CD14-positive monocyte (primary cell): ENCODE measurements at regions of chr15 and their contacts with region 1.

Region 1: GRCh38 chr15:71743861-71744382 is 66.4 kb upstream of the NR2E3 start:
- DNase-seq: peak; percentile 21 to 36 (median 35)
- H3K4me3 ChIP-seq: no peak overlapping the region
- H3K4me3 Mint-ChIP-seq: no peak overlapping the region
- H3K27ac ChIP-seq: no peak overlapping the region
- H3K27ac Mint-ChIP-seq: no peak overlapping the region
- H3K4me1 ChIP-seq: no peaks in the 10 kb centered on the region
- H3K4me1 Mint-ChIP-seq: no peaks in the 10 kb centered on the region
- H3K27me3 ChIP-seq: no peaks in the 10 kb centered on the region
- H3K27me3 Mint-ChIP-seq: peaks cover 0 to 7% (median 4%) of the 10 kb centered on the region in 3 donors
- CTCF ChIP-seq: peak; percentile 86

Region 2: DNA sequence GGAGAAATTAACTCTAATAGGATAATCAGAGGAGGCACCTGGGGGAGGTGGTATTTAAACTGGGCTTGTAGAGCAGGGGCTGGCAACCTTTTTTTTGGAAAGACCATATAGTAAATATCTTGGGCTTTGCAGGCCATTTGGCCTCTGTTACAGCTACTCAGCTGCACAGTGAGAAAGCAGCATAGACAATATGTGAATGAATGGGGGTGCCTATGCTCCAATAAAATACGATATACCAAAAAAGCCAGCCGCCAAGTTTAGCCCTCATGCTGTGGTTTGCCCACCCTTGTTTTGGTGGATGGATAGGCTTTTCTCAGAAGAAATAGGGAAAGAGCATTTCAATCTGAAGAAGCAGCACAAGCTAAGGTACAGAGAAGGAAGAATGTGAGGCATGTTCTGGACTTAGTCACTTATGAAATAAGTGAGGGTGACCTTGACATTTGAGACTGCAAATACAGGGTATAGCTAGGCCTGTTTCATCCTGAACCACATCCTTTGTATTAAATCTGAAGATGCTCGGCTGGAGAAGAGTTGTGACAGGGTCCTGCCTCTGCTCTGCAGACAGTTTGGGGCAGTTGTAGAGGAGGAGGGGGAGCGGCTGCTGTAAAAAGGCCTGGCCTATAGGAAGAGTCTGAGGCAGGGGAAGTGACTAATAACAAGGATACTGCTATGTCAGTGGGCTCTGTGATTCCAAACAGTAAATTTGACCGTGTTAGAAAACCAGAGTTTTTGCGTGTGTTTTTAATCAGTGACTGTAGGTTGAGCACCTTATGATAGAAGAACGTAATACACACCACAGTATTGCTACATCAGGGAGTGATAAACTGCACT is 64.5 kb before region 1 on chr15:
- intact Hi-C with region 1: no loop called
- DNase-seq: no peak
- H3K4me3 ChIP-seq: no peak overlapping the region
- H3K4me3 Mint-ChIP-seq: peak overlapping the region in 1 of 2 donors; percentile 36
- H3K27ac ChIP-seq: no peak overlapping the region
- H3K27ac Mint-ChIP-seq: no peak overlapping the region
- H3K4me1 ChIP-seq: no peaks in the 10 kb centered on the region
- H3K4me1 Mint-ChIP-seq: no peaks in the 10 kb centered on the region
- H3K27me3 ChIP-seq: no peaks in the 10 kb centered on the region
- H3K27me3 Mint-ChIP-seq: peaks cover 4 to 11% (median 6%) of the 10 kb centered on the region in 3 donors
- CTCF ChIP-seq: no peak

Region 3: GRCh38 chr15:71800835-71801745 is 57.2 kb after region 1 on chr15:
- intact Hi-C with region 1: loop called in 1 of 2 experiments (anchors 2 kb)
- DNase-seq: peak in 2 of 3 donors; percentile 5 to 10
- H3K4me3 ChIP-seq: no peak overlapping the region
- H3K4me3 Mint-ChIP-seq: no peak overlapping the region
- H3K27ac ChIP-seq: no peak overlapping the region
- H3K27ac Mint-ChIP-seq: no peak overlapping the region
- H3K4me1 ChIP-seq: no peaks in the 10 kb centered on the region
- H3K4me1 Mint-ChIP-seq: peaks cover 2% of the 10 kb centered on the region
- H3K27me3 ChIP-seq: no peaks in the 10 kb centered on the region
- H3K27me3 Mint-ChIP-seq: peaks cover 6 to 8% (median 7%) of the 10 kb centered on the region in 3 donors
- CTCF ChIP-seq: peak; percentile 60

Region 4: GRCh38 chr15:72155635-72156616 is 412.0 kb after region 1 on chr15:
- intact Hi-C with region 1: loop called (anchors 2 to 10 kb)
- DNase-seq: peak; percentile 70 to 75 (median 74)
- H3K4me3 ChIP-seq: peak overlapping the region; percentile 35 to 74 (median 46)
- H3K4me3 Mint-ChIP-seq: peak overlapping the region; percentile 81 to 92
- H3K27ac ChIP-seq: peak overlapping the region in 1 of 2 donors; percentile 34
- H3K27ac Mint-ChIP-seq: peak overlapping the region in 3 of 7 donors; percentile 7 to 42 (median 41)
- H3K4me1 ChIP-seq: peaks cover 20 to 23% of the 10 kb centered on the region in 2 donors
- H3K4me1 Mint-ChIP-seq: peaks cover 23% of the 10 kb centered on the region
- H3K27me3 ChIP-seq: no peaks in the 10 kb centered on the region
- H3K27me3 Mint-ChIP-seq: peaks cover 3 to 9% (median 3%) of the 10 kb centered on the region in 3 donors
- CTCF ChIP-seq: peak; percentile 89